Sigmoid colon (tissue), 7 donors: ENCODE measurements at regions of chr5 and their contacts with region 1.

Region 1: GRCh38 chr5:4720831-4721230 is 419.3 kb upstream of the ADAMTS16 start:
- DNase-seq: no peak
- H3K4me3 ChIP-seq: no peak overlapping the region
- H3K27ac ChIP-seq: no peak overlapping the region
- H3K4me1 ChIP-seq: no peaks in the 10 kb centered on the region
- H3K27me3 ChIP-seq: no peaks in the 10 kb centered on the region
- CTCF ChIP-seq: no peak
- EP300 ChIP-seq: no peak
- POLR2A ChIP-seq: no peak

Region 2: DNA sequence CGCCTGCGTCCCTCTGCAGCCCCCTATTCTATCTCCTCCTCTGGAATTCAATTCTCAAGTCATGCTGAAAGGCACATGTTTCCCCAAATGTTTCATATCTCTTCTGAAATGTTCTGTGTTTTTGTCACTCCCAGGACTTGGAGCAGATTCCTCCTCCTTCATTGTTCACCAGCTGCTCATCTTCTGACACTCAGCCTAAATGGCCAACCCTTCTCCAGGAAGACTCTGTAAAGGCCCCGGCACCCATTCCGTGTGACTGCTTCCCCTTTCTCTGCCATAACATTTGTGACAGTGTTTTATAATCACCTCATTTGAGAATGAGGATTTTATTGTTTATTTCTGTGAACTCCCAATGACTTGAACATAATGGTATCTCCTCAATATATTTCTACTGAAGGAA is 248.5 kb after region 1 on chr5:
- intact Hi-C with region 1: loop called (anchors 10 kb)
- DNase-seq: no peak
- H3K4me3 ChIP-seq: no peak overlapping the region
- H3K27ac ChIP-seq: no peak overlapping the region
- H3K4me1 ChIP-seq: no peaks in the 10 kb centered on the region
- H3K27me3 ChIP-seq: no peaks in the 10 kb centered on the region
- CTCF ChIP-seq: no peak
- EP300 ChIP-seq: no peak
- POLR2A ChIP-seq: no peak